GM12878 (cell line): ENCODE measurements at regions of chr12 and their contacts with region 1.

Region 1: GRCh38 chr12:132153501-132154340 is 9.5 kb downstream of the NOC4L start:
- DNase-seq: peak; percentile 8
- ATAC-seq: peak; percentile 99
- H3K4me3 ChIP-seq: no peak overlapping the region
- H3K27ac ChIP-seq: no peak overlapping the region
- H3K4me1 ChIP-seq: no peaks in the 10 kb centered on the region
- H3K27me3 ChIP-seq: no peaks in the 10 kb centered on the region
- CTCF ChIP-seq: peak; percentile 93 to 97 (median 95); a peak in 5 of 6 replicates
- EP300 ChIP-seq: no peak
- POLR2A ChIP-seq: peak; percentile 51
- RAD21 ChIP-seq: peak; percentile 86

Region 2: DNA sequence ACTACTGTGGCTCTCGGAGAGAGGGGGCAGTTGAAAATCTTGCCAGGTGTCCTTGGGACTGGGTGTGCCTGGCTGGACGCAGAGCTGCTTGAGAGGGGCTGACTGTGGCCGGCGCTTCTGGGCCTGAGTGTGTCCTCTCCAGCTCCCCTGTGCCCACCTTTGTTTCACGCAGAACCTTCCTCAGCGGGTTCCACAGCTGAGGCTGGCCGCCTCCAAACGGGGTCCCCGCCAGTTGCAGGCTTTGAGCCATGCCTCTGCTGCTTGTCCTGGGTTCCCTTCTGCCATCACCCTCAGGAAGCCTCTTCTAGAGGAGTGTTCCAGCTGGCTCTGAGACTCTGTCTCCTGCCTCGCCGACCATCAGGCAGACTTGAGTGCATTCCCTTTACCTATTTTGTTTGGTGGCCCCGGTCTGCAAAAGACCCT is 59.3 kb before region 1 on chr12:
- CTCF ChIA-PET with region 1: no interaction called
- POLR2A ChIA-PET with region 1: no interaction called
- RAD21 ChIA-PET with region 1: no interaction called
- SMC1A ChIA-PET with region 1: no interaction called
- in situ Hi-C with region 1: no loop called
- intact Hi-C with region 1: no loop called
- DNase-seq: no peak
- ATAC-seq: no peak
- H3K4me3 ChIP-seq: no peak overlapping the region
- H3K27ac ChIP-seq: no peak overlapping the region
- H3K4me1 ChIP-seq: no peaks in the 10 kb centered on the region
- H3K27me3 ChIP-seq: no peaks in the 10 kb centered on the region
- CTCF ChIP-seq: no peak
- EP300 ChIP-seq: no peak
- POLR2A ChIP-seq: no peak
- RAD21 ChIP-seq: no peak

Region 3: GRCh38 chr12:132218915-132219314 is 65.2 kb after region 1 on chr12:
- CTCF ChIA-PET with region 1: interaction called, 5 read pairs
- POLR2A ChIA-PET with region 1: no interaction called
- RAD21 ChIA-PET with region 1: interaction called, 5 read pairs
- SMC1A ChIA-PET with region 1: interaction called, 4 read pairs
- in situ Hi-C with region 1: no loop called
- intact Hi-C with region 1: loop called (anchors 2 kb)
- DNase-seq: no peak
- ATAC-seq: peak; percentile 52; the same call in 2 of the 3 replicates
- H3K4me3 ChIP-seq: no peak overlapping the region
- H3K27ac ChIP-seq: no peak overlapping the region
- H3K4me1 ChIP-seq: no peaks in the 10 kb centered on the region
- H3K27me3 ChIP-seq: no peaks in the 10 kb centered on the region
- CTCF ChIP-seq: peak; percentile 15 to 38 (median 35); a peak in 3 of 6 replicates
- EP300 ChIP-seq: no peak
- POLR2A ChIP-seq: no peak
- RAD21 ChIP-seq: peak; percentile 12; the same call in 1 of the 2 replicates

Region 4: DNA sequence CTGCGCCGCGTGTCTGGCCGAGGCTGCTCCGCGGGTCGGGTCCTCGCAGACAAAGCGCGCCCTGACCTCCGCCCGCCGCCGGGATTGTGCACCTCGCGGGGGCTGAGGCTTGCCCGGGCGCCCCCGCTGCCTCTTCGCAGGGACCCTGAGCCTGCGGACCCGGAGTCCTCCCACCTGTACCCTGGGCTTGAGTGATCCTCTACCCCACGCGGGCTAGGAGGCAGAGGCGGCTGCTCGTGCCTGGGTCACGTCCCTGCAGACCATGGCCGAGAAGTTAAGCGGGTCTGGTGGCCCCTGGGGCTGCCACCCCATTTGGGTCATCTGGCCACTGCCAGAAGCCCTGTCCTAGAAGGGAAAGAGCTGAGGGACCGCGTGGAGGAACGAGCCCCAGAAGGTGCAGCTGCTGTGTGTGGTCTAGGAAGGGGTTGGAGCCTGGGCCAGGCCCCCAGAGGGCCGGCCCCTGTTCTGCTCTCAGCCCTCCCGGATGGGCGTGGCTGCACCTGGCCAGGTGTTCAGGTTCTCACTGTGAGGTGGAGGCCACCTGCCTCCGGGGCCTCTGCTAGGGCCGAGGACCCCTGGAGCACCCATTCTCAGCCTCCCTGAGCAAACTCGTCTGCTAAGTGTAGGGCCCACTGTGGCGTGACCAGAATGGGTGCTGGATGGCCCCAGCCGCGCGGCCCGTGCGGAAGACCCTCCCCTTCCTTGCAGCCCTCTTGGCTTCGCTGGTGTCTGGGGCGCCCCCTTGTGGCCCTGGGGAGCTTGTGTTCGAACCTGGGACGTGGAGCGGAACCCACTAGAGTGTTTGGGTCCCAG is 407.1 kb after region 1 on chr12:
- CTCF ChIA-PET with region 1: no interaction called
- POLR2A ChIA-PET with region 1: no interaction called
- RAD21 ChIA-PET with region 1: interaction called, 6 read pairs
- SMC1A ChIA-PET with region 1: no interaction called
- in situ Hi-C with region 1: no loop called
- intact Hi-C with region 1: loop called (anchors 5 kb)
- DNase-seq: peak; percentile 12
- ATAC-seq: peak; percentile 83
- H3K4me3 ChIP-seq: peak overlapping the region; percentile 67
- H3K27ac ChIP-seq: no peak overlapping the region
- H3K4me1 ChIP-seq: peaks cover 6% of the 10 kb centered on the region; the same call in 1 of the 2 replicates
- H3K27me3 ChIP-seq: no peaks in the 10 kb centered on the region; a peak in 1 of 4 replicates
- CTCF ChIP-seq: peak; percentile 64 to 87 (median 82)
- EP300 ChIP-seq: no peak
- POLR2A ChIP-seq: no peak; the same call in 1 of the 2 replicates
- RAD21 ChIP-seq: peak; percentile 58

Region 5: GRCh38 chr12:132614861-132615578 is 461.3 kb after region 1 on chr12:
- CTCF ChIA-PET with region 1: interaction called, 9 read pairs
- POLR2A ChIA-PET with region 1: no interaction called
- RAD21 ChIA-PET with region 1: interaction called, 6 read pairs
- SMC1A ChIA-PET with region 1: interaction called, 4 read pairs
- in situ Hi-C with region 1: no loop called
- intact Hi-C with region 1: loop called (anchors 1 kb)
- DNase-seq: peak; percentile 26
- ATAC-seq: peak; percentile 97
- H3K4me3 ChIP-seq: no peak overlapping the region
- H3K27ac ChIP-seq: no peak overlapping the region
- H3K4me1 ChIP-seq: no peaks in the 10 kb centered on the region
- H3K27me3 ChIP-seq: peaks cover 0 to under 1% of the 10 kb centered on the region in 2 experiments; a peak in 1 of 4 replicates
- CTCF ChIP-seq: peak; percentile 84 to 88 (median 88)
- EP300 ChIP-seq: no peak
- POLR2A ChIP-seq: no peak
- RAD21 ChIP-seq: peak; percentile 82